CD4-positive, alpha-beta T cell (primary cell): ENCODE measurements at regions of chr7 and their contacts with region 1.

Region 1: DNA sequence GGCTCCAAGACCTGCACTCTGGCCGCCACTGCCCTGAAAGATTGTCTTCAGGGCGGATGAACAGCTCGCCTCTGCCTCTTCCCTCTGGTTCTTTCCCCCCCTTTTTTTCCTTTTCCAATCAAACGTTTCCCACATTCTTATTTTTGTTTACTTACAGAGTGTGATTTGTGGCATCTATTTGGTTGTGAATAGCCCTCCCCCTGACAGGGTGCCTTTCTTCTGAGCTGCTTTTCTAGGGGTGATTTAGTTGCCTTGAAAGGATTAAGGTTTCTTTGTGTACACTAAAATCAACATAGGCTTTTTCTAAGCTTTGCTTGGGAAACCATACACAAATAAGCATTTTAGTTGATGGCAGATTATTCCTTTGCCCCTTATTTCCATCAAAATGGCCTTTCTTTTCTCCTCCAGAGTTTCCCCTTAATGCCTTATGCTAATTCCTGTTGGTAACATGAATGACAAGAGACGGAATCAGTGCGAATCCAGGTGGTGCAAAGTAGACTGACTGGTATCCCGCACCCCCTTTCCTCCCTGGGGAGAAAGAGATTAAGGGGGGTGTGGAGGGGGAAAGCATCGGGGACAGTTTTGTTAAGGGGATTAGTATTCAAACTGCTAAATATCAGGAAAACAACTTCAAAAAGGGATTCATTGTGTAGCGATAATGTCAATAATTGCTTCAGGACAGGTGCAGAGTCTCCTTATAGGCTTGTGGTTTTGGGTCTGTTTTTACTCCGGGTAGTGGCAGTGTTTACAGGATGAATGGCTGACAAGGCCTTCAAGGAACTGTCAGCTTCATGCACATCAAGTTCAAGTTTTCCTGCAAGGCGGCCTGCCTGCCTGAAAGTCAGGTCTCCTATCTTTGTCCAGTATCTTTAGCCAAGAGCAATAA is 431.6 kb upstream of the GALNT17 start:
- DNase-seq: no peak
- ATAC-seq: no peak
- H3K4me3 ChIP-seq: no peak overlapping the region
- H3K4me3 Mint-ChIP-seq: no peak overlapping the region
- H3K27ac ChIP-seq: no peak overlapping the region
- H3K27ac Mint-ChIP-seq: no peak overlapping the region
- H3K4me1 ChIP-seq: peaks cover 13% of the 10 kb centered on the region
- H3K4me1 Mint-ChIP-seq: peaks cover 34% of the 10 kb centered on the region
- H3K27me3 ChIP-seq: peaks cover 0 to 21% of the 10 kb centered on the region in 2 experiments
- H3K27me3 Mint-ChIP-seq: peaks cover 33% of the 10 kb centered on the region
- CTCF ChIP-seq: no peak

Region 2: DNA sequence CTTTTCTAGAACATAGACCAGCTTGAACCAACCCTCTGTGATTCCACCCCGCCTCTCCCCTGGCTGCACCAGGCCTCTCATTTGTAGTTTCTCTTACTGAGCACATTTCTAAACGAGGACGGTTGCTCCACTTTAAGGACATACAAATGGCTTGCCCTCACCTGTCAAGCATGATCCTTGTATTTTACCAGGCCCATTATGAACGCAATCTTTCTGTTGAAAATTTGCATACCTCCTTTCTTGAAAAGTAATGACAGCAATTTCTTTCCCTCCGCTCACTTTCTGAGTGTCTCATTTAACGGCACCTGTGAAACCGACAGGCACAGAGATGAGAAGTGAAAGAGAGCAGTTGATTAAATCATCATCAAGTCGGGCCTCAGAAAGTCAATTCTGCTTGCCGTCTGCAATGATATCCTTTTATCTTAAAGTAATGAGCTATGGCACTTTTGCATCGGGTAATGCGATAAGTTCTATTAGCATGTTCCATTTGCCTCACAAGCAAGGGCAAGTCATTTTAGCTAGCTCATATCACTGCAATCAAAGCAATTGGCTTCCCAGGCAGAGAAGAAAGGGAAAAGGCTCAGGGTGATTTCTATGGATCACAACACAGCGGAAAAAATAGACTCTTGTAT is 273.9 kb before region 1 on chr7:
- CTCF ChIA-PET with region 1: no interaction called
- POLR2A ChIA-PET with region 1: no interaction called
- intact Hi-C with region 1: loop called in 1 of 2 experiments (anchors 10 kb)
- DNase-seq: no peak
- ATAC-seq: no peak
- H3K4me3 ChIP-seq: no peak overlapping the region
- H3K4me3 Mint-ChIP-seq: no peak overlapping the region
- H3K27ac ChIP-seq: no peak overlapping the region
- H3K27ac Mint-ChIP-seq: no peak overlapping the region
- H3K4me1 ChIP-seq: no peaks in the 10 kb centered on the region
- H3K4me1 Mint-ChIP-seq: no peaks in the 10 kb centered on the region
- H3K27me3 ChIP-seq: no peaks in the 10 kb centered on the region
- H3K27me3 Mint-ChIP-seq: no peaks in the 10 kb centered on the region
- CTCF ChIP-seq: no peak